H1 (cell line): ENCODE measurements at regions of chr6 and their contacts with region 1.

Region 1: DNA sequence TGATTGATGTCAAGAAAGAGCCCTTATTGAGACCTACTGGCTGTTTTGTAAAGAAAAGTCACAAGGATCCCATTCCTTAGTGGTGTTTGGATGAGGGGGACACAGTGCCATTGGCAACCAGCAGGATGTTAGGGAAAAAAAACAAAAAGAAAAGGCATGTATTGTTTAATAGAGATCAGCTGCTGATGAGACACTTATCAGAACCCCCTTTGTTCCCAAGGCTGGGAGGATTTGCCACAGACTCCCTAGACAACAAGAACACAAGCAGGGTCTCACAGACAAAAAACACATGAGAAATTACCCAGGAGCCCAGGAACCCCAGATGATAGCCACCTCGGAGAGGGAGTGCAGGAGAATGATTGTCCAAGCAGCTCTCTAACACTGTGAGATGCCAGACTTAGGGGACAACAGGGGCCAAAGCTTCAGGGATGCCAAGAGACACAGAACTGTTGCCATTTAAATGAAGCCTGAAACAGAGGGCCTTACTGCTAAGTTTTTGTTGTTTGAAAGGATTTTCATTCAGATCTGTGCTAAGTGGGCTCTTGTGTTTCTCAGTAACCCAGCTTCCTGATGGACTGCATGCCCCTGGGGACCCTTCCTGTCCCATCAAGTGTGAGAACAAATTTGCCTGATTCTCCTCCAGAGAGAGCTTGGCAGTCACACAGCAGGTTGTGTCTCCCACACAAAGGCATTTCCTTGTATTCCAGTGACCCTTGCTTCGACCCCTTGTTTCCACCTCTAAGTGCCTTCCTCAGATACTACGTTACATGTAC is 48.7 kb upstream of the HEY2 start:
- DNase-seq: no peak
- H3K4me3 ChIP-seq: peak overlapping the region in 1 of 4 experiments; percentile 30; a peak in 1 of 8 replicates
- H3K27ac ChIP-seq: peak overlapping the region; percentile 25; the same call in 1 of the 2 replicates
- H3K4me1 ChIP-seq: peaks cover 0 to 6% (median 4%) of the 10 kb centered on the region in 4 experiments; a peak in 5 of 7 replicates
- H3K27me3 ChIP-seq: no peaks in the 10 kb centered on the region
- CTCF ChIP-seq: no peak
- EP300 ChIP-seq: no peak
- POLR2A ChIP-seq: peak in 1 of 2 experiments; percentile 91; a peak in 2 of 3 replicates
- RAD21 ChIP-seq: 0 out of 4 replicates have a peak, but pooled peaks of 1 of the 2 experiments have one; percentile 7

Region 2: DNA sequence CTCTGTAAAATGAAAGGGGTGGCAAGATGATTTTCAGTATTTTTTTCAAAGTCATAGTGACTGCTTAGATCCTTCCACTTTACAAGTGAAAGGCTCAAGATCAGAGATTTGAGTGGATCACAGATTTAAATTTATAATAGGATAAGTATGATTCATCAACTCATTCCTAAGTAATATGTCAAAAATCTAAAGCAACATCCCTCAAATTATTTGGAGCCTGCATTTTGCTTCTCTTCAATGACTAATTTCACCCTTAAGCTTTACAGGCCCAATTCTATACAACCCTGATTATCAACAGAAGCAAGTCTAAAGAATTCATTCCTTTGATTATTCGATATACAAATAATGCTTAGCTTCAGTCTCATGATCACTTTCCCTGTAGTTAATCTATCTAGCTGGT is 45.3 kb before region 1 on chr6:
- CTCF ChIA-PET with region 1: no interaction called
- POLR2A ChIA-PET with region 1: no interaction called
- DNase-seq: no peak
- H3K4me3 ChIP-seq: no peak overlapping the region
- H3K27ac ChIP-seq: no peak overlapping the region
- H3K4me1 ChIP-seq: peaks cover 0 to 2% (median 0%) of the 10 kb centered on the region in 4 experiments; a peak in 1 of 7 replicates
- H3K27me3 ChIP-seq: no peaks in the 10 kb centered on the region
- CTCF ChIP-seq: no peak
- EP300 ChIP-seq: no peak
- POLR2A ChIP-seq: no peak
- RAD21 ChIP-seq: no peak

Region 3: GRCh38 chr6:125714441-125715090 is 13.8 kb after region 1 on chr6:
- CTCF ChIA-PET with region 1: interaction called, 3 read pairs
- POLR2A ChIA-PET with region 1: interaction called, 10 read pairs
- DNase-seq: no peak
- H3K4me3 ChIP-seq: no peak overlapping the region
- H3K27ac ChIP-seq: no peak overlapping the region
- H3K4me1 ChIP-seq: no peaks in the 10 kb centered on the region
- H3K27me3 ChIP-seq: no peaks in the 10 kb centered on the region
- CTCF ChIP-seq: no peak
- EP300 ChIP-seq: no peak
- POLR2A ChIP-seq: no peak
- RAD21 ChIP-seq: no peak

Region 4: GRCh38 chr6:125746731-125747594 is 46.2 kb after region 1 on chr6:
- CTCF ChIA-PET with region 1: no interaction called
- POLR2A ChIA-PET with region 1: interaction called, 21 read pairs
- DNase-seq: peak; percentile 64 to 72
- H3K4me3 ChIP-seq: peak overlapping the region; percentile 72 to 77 (median 76)
- H3K27ac ChIP-seq: no peak overlapping the region
- H3K4me1 ChIP-seq: peaks cover 2 to 15% (median 7%) of the 10 kb centered on the region in 4 experiments; a peak in 5 of 7 replicates
- H3K27me3 ChIP-seq: peaks cover 0 to 25% (median 16%) of the 10 kb centered on the region in 4 experiments; a peak in 6 of 7 replicates
- CTCF ChIP-seq: no peak
- EP300 ChIP-seq: peak in 1 of 2 experiments; percentile 70; a peak in 1 of 3 replicates
- POLR2A ChIP-seq: no peak; a peak in 2 of 3 replicates
- RAD21 ChIP-seq: 0 out of 4 replicates have a peak, but pooled peaks of 1 of the 2 experiments have one; percentile 15

Region 5: DNA sequence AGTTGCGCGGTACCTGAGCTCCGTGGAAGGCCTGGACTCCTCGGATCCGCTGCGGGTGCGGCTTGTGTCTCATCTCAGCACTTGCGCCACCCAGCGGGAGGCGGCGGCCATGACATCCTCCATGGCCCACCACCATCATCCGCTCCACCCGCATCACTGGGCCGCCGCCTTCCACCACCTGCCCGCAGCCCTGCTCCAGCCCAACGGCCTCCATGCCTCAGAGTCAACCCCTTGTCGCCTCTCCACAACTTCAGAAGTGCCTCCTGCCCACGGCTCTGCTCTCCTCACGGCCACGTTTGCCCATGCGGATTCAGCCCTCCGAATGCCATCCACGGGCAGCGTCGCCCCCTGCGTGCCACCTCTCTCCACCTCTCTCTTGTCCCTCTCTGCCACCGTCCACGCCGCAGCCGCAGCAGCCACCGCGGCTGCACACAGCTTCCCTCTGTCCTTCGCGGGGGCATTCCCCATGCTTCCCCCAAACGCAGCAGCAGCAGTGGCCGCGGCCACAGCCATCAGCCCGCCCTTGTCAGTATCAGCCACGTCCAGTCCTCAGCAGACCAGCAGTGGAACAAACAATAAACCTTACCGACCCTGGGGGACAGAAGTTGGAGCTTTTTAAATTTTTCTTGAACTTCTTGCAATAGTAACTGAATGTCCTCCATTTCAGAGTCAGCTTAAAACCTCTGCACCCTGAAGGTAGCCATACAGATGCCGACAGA is 58.6 kb after region 1 on chr6:
- CTCF ChIA-PET with region 1: interaction called, 7 read pairs
- POLR2A ChIA-PET with region 1: interaction called, 10 read pairs
- DNase-seq: peak in 1 of 2 experiments; percentile 94
- H3K4me3 ChIP-seq: no peak overlapping the region
- H3K27ac ChIP-seq: no peak overlapping the region
- H3K4me1 ChIP-seq: peaks cover 0 to 3% (median 0%) of the 10 kb centered on the region in 4 experiments; a peak in 1 of 7 replicates
- H3K27me3 ChIP-seq: no peaks in the 10 kb centered on the region
- CTCF ChIP-seq: peak; percentile 65 to 94 (median 83)
- EP300 ChIP-seq: no peak
- POLR2A ChIP-seq: no peak
- RAD21 ChIP-seq: peak; percentile 76 to 81

Region 6: DNA sequence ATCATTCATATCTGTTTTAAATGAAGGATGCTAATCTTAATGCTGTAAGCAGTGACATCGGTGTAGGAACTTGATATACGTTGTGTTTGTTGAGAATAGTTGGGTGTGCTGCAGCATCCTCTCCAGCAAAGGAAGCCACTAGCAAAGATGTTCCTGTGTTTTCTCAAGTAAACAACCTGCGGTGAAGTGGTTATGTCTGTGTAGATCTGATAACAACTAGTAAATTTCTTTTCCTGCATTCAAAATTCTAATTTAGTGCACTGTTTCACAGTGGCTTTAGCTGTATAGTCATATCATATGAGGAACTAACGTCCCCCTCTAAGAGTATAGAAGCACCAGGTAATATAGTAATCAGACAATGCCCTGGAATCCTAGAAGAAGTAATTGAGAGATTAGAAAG is 128.7 kb after region 1 on chr6:
- CTCF ChIA-PET with region 1: no interaction called
- POLR2A ChIA-PET with region 1: no interaction called
- DNase-seq: no peak
- H3K4me3 ChIP-seq: no peak overlapping the region
- H3K27ac ChIP-seq: no peak overlapping the region
- H3K4me1 ChIP-seq: no peaks in the 10 kb centered on the region
- H3K27me3 ChIP-seq: no peaks in the 10 kb centered on the region
- CTCF ChIP-seq: no peak
- EP300 ChIP-seq: no peak
- POLR2A ChIP-seq: no peak
- RAD21 ChIP-seq: no peak